ENCODE measurements at regions of chr9 and their contacts with region 1.

Region 1: GRCh38 chr9:69549310-69550202 is 122.6 kb downstream of the APBA1 start:
- DNase-seq: peak in 1 of 3 donors; percentile 31
- ATAC-seq: peak; percentile 69
- H3K4me3 ChIP-seq: no peak overlapping the region
- H3K4me1 ChIP-seq: no peaks in the 10 kb centered on the region
- CTCF ChIP-seq: peak; percentile 47

Region 2: DNA sequence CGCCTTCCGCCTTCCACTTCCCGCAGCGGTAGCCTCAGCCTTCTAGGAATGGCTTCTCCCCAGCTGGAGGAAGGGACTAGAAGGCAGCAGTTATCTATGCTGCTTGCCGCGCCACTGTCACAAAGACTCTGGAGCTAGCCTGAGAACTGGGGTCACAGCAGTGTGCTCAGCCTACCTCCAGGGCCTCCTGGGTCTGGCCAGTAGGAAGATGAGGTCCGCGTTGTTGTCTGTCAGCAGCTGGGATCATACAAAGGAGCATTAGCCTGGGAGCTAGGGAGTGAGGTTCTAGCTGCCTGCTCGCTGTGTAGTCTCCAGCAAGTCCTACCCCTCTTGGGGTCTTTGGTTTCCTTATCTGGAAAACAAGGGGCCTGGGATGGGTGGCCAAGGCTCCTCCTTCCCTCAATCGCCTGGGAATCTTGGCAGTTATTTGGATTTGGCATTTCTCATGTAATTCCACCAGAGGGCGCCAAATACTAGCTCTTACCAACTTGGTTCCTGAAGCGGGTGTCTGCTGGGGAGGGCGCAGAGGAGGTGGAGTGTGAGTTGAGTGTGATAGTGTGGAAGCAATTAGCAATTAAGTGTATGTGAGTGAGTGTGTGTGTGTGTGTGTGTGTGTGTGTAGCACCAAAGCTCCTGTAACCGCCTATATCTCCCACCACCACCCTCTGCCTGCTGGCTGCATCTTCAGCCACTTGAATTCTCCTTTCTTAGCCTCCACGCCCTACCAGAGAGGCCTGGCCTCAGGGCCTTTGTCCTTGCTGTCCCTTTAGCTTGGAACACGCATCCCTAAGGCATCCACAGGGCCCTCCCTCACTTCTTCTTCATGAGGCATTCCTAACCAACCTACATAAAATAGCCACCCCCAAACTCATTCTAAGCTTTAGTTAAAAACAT is 127.4 kb before region 1 on chr9:
- intact Hi-C with region 1: loop called (anchors 5 kb)
- DNase-seq: peak in 2 of 3 donors; percentile 45 to 59
- ATAC-seq: peak; percentile 90
- H3K4me3 ChIP-seq: no peak overlapping the region
- H3K4me1 ChIP-seq: no peaks in the 10 kb centered on the region
- CTCF ChIP-seq: peak; percentile 43

Region 3: GRCh38 chr9:69485470-69485869 is 64.1 kb before region 1 on chr9:
- intact Hi-C with region 1: no loop called
- DNase-seq: peak in 1 of 3 donors; percentile 53
- ATAC-seq: peak; percentile 100
- H3K4me3 ChIP-seq: no peak overlapping the region
- H3K4me1 ChIP-seq: no peaks in the 10 kb centered on the region
- CTCF ChIP-seq: no peak

Region 4: DNA sequence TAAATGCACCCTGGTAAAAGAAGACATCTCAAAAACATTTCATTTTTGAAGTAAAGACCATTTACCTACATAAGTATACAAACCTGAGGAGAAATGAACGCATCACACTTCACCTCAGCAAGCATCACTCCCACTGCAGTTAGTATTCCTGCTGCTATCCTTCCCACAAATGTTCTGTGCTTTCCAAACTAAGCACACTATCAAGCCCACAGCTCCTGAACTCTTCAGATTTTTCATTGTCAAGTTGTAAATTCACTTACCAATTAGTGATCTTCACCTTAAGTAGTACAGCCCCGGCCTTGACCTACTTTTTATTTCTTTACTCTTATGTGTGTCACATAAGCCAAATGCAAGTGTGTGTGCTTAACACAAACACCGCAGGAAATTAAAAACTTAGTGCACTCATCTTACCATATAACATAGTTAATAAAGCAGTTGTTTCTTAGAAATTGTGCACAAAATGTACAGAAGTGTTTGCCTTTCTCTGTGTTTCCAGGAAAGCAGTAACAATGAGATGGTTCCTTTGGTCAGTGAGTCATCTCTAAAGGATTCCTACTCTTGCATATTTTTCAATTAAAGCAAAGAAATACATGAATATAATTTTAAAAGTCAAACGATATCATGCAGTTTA is 46.8 kb before region 1 on chr9:
- intact Hi-C with region 1: no loop called
- DNase-seq: no peak
- ATAC-seq: peak; percentile 21
- H3K4me3 ChIP-seq: no peak overlapping the region
- H3K4me1 ChIP-seq: no peaks in the 10 kb centered on the region
- CTCF ChIP-seq: no peak